PC-9 (cell line): ENCODE measurements at regions of chr3 and their contacts with region 1.

Region 1: DNA sequence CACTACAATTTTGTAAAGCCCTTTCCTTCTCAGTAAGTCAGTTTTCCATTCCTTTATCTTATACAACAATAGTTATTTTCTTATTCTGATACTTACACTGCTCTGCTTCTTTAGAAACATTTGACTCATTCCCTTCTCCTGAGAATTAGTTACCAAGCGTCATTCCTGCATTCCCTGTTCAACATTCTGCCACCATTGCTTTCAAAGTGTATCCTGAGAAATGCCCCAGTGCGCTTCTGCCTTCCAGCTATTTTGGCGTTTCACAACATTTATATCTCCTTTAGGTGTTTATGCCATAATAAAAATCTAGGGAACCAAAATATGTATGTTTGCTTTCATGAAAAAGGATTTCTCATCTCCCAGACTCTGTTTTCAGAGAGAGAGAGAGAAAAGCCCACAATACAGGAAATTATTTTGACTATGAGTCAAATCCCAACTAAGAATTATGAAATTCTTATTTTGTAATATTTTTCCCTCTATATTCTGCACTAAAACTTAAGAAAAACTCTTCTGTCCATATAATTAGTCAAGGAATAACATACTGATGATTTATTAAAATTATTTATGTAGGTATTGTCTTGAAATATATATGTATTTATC is 118.2 kb upstream of the RAP2B start:
- DNase-seq: peak; percentile 40 to 92
- H3K4me3 ChIP-seq: peak overlapping the region; percentile 54
- H3K27ac ChIP-seq: peak overlapping the region; percentile 94
- H3K4me1 ChIP-seq: peaks cover 37% of the 10 kb centered on the region
- H3K27me3 ChIP-seq: no peaks in the 10 kb centered on the region
- CTCF ChIP-seq: no peak

Region 2: GRCh38 chr3:153023896-153024295 is 19.9 kb before region 1 on chr3:
- CTCF ChIA-PET with region 1: no interaction called
- POLR2A ChIA-PET with region 1: no interaction called
- intact Hi-C with region 1: no loop called
- DNase-seq: no peak
- H3K4me3 ChIP-seq: no peak overlapping the region
- H3K27ac ChIP-seq: no peak overlapping the region
- H3K4me1 ChIP-seq: no peaks in the 10 kb centered on the region
- H3K27me3 ChIP-seq: no peaks in the 10 kb centered on the region
- CTCF ChIP-seq: no peak

Region 3: GRCh38 chr3:153138276-153139210 is 94.7 kb after region 1 on chr3:
- CTCF ChIA-PET with region 1: no interaction called
- POLR2A ChIA-PET with region 1: no interaction called
- intact Hi-C with region 1: loop called (anchors 1 kb)
- DNase-seq: peak; percentile 89 to 100
- H3K4me3 ChIP-seq: no peak overlapping the region
- H3K27ac ChIP-seq: peak overlapping the region; percentile 98
- H3K4me1 ChIP-seq: peaks cover 43% of the 10 kb centered on the region
- H3K27me3 ChIP-seq: no peaks in the 10 kb centered on the region
- CTCF ChIP-seq: no peak

Region 4: DNA sequence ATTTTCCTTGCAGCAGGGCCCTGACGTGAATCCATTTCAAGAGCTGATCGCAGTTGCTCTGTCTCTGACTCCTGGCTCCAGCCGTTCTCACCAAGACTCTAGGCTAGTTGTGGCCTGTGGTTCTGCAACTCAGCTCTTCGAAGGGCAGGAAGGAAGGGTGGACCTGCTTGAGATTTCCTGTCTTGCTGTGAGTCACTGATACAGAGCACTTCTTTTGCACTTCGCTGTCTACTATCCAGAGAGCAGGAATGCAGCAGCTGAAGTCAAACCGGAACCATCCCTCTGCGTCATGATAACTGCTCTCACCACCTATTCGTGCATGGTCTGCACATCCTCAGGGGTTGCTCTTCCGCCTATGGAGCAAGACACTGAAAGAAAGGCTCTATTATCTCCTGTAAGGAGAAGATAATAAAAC is 177.9 kb after region 1 on chr3:
- CTCF ChIA-PET with region 1: no interaction called
- POLR2A ChIA-PET with region 1: no interaction called
- intact Hi-C with region 1: loop called (anchors 2 kb)
- DNase-seq: peak; percentile 72 to 92
- H3K4me3 ChIP-seq: no peak overlapping the region
- H3K27ac ChIP-seq: peak overlapping the region; percentile 59
- H3K4me1 ChIP-seq: peaks cover 19% of the 10 kb centered on the region
- H3K27me3 ChIP-seq: no peaks in the 10 kb centered on the region
- CTCF ChIP-seq: no peak

Region 5: DNA sequence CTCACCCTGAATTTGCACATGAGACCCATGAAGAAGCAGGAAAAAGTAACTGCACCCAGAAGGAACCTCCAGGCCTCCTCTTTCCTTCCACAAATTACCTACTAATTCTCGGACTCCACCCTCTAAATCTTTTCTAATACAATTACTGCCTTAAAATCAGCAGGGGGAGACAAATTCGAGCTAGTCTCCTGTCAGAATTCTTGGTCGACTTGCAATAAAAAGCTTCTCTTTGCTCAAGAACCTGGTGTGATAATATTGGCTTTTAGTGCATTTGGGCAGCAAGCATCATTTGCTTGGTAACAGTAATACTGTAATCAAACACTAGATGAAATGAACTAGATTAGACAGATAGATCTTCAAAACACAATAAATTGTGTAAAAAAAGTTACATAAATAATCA is 400.1 kb after region 1 on chr3:
- CTCF ChIA-PET with region 1: no interaction called
- POLR2A ChIA-PET with region 1: no interaction called
- intact Hi-C with region 1: loop called (anchors 2 kb)
- DNase-seq: no peak
- H3K4me3 ChIP-seq: no peak overlapping the region
- H3K27ac ChIP-seq: no peak overlapping the region
- H3K4me1 ChIP-seq: no peaks in the 10 kb centered on the region
- H3K27me3 ChIP-seq: no peaks in the 10 kb centered on the region
- CTCF ChIP-seq: no peak; the same call in 1 of the 2 replicates

Region 6: GRCh38 chr3:153595186-153595815 is 551.5 kb after region 1 on chr3:
- CTCF ChIA-PET with region 1: interaction called, 3 read pairs
- POLR2A ChIA-PET with region 1: no interaction called
- intact Hi-C with region 1: loop called (anchors 1 kb)
- DNase-seq: no peak
- H3K4me3 ChIP-seq: no peak overlapping the region
- H3K27ac ChIP-seq: no peak overlapping the region
- H3K4me1 ChIP-seq: peaks cover 16% of the 10 kb centered on the region
- H3K27me3 ChIP-seq: no peaks in the 10 kb centered on the region
- CTCF ChIP-seq: peak; percentile 83

Region 7: DNA sequence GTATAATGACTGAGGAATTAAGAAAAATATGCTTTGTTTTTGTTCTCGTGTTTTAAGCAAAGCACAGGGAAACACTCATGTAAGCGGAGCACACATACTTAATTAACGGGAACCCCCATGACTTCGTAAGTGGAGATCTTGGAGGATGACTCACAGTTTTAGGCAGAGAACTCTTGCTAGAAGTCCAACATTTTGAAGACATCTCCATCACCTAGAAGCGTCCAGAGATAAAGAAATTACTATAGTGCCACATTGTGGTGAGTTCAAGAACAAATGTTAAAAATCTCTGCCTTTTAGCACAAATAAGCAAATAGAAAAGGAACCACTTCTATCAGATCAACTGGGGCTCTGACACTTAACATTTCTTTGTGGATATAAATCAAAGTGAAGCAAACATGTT is 883.3 kb after region 1 on chr3:
- CTCF ChIA-PET with region 1: no interaction called
- POLR2A ChIA-PET with region 1: no interaction called
- intact Hi-C with region 1: loop called (anchors 5 kb)
- DNase-seq: no peak
- H3K4me3 ChIP-seq: no peak overlapping the region
- H3K27ac ChIP-seq: no peak overlapping the region
- H3K4me1 ChIP-seq: no peaks in the 10 kb centered on the region
- H3K27me3 ChIP-seq: no peaks in the 10 kb centered on the region
- CTCF ChIP-seq: peak; percentile 60